ENCODE measurements at regions of chr4 and their contacts with region 1.

Region 1: DNA sequence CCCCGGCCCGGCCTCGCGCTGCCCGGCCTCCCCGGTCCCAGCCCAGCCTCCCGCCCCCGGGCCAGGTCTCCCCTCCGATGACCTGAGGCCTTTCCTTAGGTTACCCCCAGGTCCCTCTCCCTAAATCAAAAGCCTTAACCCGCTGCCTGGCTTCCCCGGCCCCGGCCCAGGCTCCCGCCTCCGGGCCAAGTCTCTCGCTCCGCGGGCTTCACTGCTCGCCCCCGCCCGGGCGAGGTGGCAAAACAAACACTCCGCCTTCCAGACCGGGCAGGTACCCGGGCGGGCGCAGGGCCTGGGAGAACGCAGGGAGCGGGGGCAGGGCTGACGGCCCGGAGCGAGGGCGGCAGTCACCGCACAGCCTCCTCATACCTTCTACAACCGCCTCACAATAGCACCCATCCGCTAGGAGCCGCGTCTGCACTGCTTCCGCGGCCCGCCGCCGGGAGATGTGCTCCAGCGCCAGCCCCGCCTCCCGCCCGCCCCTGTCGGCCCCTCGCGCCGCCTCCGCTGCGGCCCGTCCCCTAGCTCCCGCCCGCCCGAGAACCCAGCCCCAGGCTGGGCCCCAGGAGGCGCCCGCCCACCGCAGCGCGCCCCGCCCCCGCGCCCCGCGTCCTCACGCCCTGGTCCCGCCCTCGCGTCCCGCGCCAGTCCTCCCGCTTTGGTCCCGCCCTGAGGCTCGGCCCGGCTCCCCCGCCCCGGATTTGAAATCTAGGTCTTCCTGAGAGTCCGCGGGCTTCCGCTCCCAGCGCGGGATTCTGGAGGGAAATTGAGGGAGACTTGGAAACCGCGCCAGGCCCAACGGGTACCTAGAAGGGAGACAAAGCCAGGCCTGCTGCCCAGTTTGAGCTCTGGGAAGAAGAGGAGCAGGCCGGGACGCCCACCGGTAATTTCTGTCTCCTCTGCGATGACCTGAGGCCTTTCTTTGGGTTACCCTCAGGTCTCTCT is at the starts of genes CASP3 and PRIMPOL:
- DNase-seq: peak; percentile 93 to 98 (median 95)
- ATAC-seq: peak; percentile 90
- H3K4me3 ChIP-seq: peak within 1 kb of the TSS; percentile 95 to 98
- H3K4me3 Mint-ChIP-seq: peak within 1 kb of the TSS; percentile 94
- H3K27ac ChIP-seq: peak within 1 kb of the TSS; percentile 77 to 87
- H3K27ac Mint-ChIP-seq: peak within 1 kb of the TSS; percentile 96
- H3K4me1 ChIP-seq: peaks cover 43% of the 10 kb centered on the region
- H3K4me1 Mint-ChIP-seq: peaks cover 54% of the 10 kb centered on the region
- H3K27me3 ChIP-seq: no peaks in the 10 kb centered on the region
- H3K27me3 Mint-ChIP-seq: no peaks in the 10 kb centered on the region
- CTCF ChIP-seq: no peak
- total RNA-seq, gene CASP3: 14.4 to 15.7 TPM
- total RNA-seq, gene PRIMPOL: 6.0 to 7.3 TPM

Region 2: DNA sequence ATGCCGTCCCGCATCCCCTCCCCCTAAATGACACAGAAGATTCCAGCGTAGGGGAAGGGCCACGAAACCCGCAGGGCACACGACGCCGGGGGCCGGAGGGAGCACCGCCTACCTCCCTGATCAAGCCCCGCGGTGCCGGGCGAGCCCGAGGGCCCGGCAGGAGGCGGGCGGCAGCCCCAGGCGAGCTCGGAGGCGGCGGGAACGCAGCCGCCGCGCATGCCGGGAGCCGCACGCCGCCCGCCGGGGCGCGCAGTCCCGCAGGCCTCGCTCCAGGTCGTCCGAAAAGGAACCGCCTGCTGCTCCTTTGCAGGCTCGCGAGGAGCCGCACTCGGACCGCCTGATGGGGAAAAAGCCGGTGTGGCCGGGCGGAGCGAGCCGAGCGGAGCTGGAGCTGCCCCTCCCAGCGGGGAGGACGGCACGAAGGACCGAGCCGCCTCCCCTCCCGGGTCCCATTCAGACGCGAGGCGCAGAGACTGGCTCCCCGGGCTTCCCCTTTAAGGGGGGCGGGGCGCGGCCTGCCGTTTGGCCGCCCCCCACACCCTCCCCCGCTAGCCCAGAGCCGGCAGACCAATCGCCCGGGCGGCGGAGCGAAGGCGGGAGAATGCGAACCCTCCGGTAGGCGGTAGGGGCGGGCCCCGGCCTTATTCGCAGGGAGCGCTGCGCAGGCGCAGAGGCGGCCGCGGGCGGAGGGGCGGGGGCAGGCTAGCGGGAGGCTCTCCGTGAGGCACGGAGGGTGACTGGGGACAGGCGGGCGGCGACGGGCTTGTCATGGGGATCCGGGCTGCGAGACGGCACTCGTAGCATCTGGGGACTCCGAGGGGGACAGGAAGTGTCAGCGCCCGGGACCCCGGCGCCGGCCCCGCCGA is 1145.0 kb before region 1 on chr4:
- CTCF ChIA-PET with region 1: no interaction called
- POLR2A ChIA-PET with region 1: no interaction called
- intact Hi-C with region 1: loop called in 1 of 2 experiments (anchors 5 kb)
- DNase-seq: peak; percentile 99 to 100 (median 99)
- ATAC-seq: peak; percentile 78
- H3K4me3 ChIP-seq: peak overlapping the region; percentile 95 to 98
- H3K4me3 Mint-ChIP-seq: peak overlapping the region; percentile 98
- H3K27ac ChIP-seq: peak overlapping the region; percentile 84 to 98
- H3K27ac Mint-ChIP-seq: peak overlapping the region; percentile 99
- H3K4me1 ChIP-seq: peaks cover 14% of the 10 kb centered on the region
- H3K4me1 Mint-ChIP-seq: peaks cover 34% of the 10 kb centered on the region
- H3K27me3 ChIP-seq: no peaks in the 10 kb centered on the region
- H3K27me3 Mint-ChIP-seq: no peaks in the 10 kb centered on the region
- CTCF ChIP-seq: no peak

Region 3: DNA sequence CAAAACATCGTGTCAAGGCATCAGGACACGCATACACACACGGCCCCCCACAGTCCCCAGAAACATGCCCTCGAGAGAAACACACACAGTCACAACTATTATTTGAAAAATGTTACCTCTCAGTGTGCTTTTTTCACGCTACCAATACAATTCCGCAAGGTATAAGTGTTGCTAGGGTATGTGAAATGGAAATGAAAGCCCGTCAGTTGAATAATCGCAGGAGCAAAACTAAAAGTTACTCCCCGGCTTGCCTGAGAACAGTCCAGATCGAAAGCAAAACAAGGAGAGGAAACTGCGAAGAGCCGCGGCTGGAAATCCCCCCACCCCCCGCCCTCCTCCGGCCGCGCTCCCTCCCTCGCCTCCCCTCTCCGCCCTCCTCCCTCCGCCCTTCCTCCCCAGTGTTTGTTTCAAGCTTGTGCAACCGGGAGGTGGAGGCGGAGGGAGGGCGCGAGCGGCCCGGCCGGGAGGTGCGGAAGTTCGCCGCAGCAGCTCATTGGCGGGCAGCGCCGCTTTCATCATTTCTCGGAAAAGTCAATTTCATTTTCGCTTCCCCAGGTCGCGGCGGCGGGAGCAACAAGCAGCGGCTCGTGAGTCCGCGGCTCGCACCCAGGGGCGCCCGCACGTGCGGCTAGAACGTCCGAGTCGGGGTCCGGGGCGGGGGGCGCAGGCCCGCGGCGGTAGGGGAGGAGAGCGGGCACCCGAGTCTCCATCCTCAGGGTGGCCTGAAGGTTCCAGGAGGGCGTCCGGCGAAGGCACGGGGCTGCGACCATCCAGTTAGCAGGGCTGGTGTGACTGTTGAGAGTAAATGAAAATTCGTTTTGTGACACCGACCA is 174.8 kb before region 1 on chr4 and contains the start of gene IRF2:
- CTCF ChIA-PET with region 1: no interaction called
- POLR2A ChIA-PET with region 1: interaction called, 5 read pairs
- intact Hi-C with region 1: loop called (anchors 1 kb)
- DNase-seq: peak; percentile 91 to 99 (median 95)
- ATAC-seq: peak; percentile 82
- H3K4me3 ChIP-seq: peak within 1 kb of the TSS; percentile 78 to 93
- H3K4me3 Mint-ChIP-seq: peak within 1 kb of the TSS; percentile 98
- H3K27ac ChIP-seq: peak within 1 kb of the TSS; percentile 94 to 95
- H3K27ac Mint-ChIP-seq: peak within 1 kb of the TSS; percentile 99
- H3K4me1 ChIP-seq: peaks cover 38% of the 10 kb centered on the region
- H3K4me1 Mint-ChIP-seq: peaks cover 67% of the 10 kb centered on the region
- H3K27me3 ChIP-seq: no peaks in the 10 kb centered on the region
- H3K27me3 Mint-ChIP-seq: no peaks in the 10 kb centered on the region
- CTCF ChIP-seq: no peak
- total RNA-seq, gene IRF2: 7.9 to 9.3 TPM

Region 4: DNA sequence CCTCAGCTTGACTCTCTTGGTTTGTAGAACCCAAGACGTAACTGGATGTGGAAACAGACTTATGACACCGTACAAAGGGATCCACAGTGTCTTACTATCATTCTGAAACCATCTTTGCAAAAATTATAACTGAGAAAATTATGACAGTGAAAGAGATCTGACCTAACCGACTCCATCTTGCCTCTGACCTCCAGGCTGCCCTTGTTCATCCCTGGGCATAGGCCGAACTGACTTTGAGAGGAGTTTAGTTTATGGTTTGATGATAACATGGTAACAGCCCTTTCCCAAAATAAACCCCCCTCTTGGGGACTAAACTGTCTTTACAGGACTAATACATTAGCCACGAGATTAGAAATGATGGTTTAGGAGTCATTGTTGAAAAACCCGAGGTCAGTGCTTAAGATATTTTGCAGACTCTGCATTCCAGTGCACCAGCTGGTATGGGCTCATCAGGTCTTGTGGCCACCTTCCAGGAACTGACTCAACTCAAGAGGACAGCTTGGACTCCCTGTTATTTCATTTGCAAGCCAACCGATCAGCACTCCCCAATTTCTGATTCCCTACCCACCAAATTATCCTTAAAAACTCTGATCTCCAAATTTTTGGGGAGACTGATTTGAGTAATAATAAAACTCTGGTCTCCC is 49.7 kb before region 1 on chr4:
- CTCF ChIA-PET with region 1: no interaction called
- POLR2A ChIA-PET with region 1: no interaction called
- intact Hi-C with region 1: no loop called
- DNase-seq: no peak
- ATAC-seq: no peak
- H3K4me3 ChIP-seq: no peak overlapping the region
- H3K4me3 Mint-ChIP-seq: no peak overlapping the region
- H3K27ac ChIP-seq: no peak overlapping the region
- H3K27ac Mint-ChIP-seq: no peak overlapping the region
- H3K4me1 ChIP-seq: peaks cover 19% of the 10 kb centered on the region
- H3K4me1 Mint-ChIP-seq: peaks cover 15% of the 10 kb centered on the region
- H3K27me3 ChIP-seq: no peaks in the 10 kb centered on the region
- H3K27me3 Mint-ChIP-seq: peaks cover 5% of the 10 kb centered on the region
- CTCF ChIP-seq: no peak

Region 5: GRCh38 chr4:184745831-184746795 is 96.8 kb after region 1 on chr4:
- CTCF ChIA-PET with region 1: no interaction called
- POLR2A ChIA-PET with region 1: no interaction called
- intact Hi-C with region 1: loop called in 1 of 2 experiments (anchors 5 kb)
- DNase-seq: peak; percentile 31 to 81 (median 74)
- ATAC-seq: peak; percentile 97
- H3K4me3 ChIP-seq: no peak overlapping the region
- H3K4me3 Mint-ChIP-seq: peak overlapping the region; percentile 53
- H3K27ac ChIP-seq: no peak overlapping the region
- H3K27ac Mint-ChIP-seq: peak overlapping the region; percentile 78
- H3K4me1 ChIP-seq: peaks cover 8% of the 10 kb centered on the region
- H3K4me1 Mint-ChIP-seq: peaks cover 16% of the 10 kb centered on the region
- H3K27me3 ChIP-seq: no peaks in the 10 kb centered on the region
- H3K27me3 Mint-ChIP-seq: peaks cover 3% of the 10 kb centered on the region
- CTCF ChIP-seq: peak; percentile 68

Region 6: GRCh38 chr4:185209031-185209851 is 559.9 kb after region 1 on chr4 and contains the start of gene SNX25:
- CTCF ChIA-PET with region 1: no interaction called
- POLR2A ChIA-PET with region 1: no interaction called
- intact Hi-C with region 1: loop called (anchors 2 to 5 kb)
- DNase-seq: peak; percentile 68 to 92 (median 89)
- ATAC-seq: peak; percentile 92
- H3K4me3 ChIP-seq: peak within 1 kb of the TSS; percentile 60 to 71
- H3K4me3 Mint-ChIP-seq: peak within 1 kb of the TSS; percentile 92
- H3K27ac ChIP-seq: peak within 1 kb of the TSS; percentile 34 to 48
- H3K27ac Mint-ChIP-seq: peak within 1 kb of the TSS; percentile 84
- H3K4me1 ChIP-seq: peaks cover 33% of the 10 kb centered on the region
- H3K4me1 Mint-ChIP-seq: peaks cover 50% of the 10 kb centered on the region
- H3K27me3 ChIP-seq: no peaks in the 10 kb centered on the region
- H3K27me3 Mint-ChIP-seq: no peaks in the 10 kb centered on the region
- CTCF ChIP-seq: no peak
- total RNA-seq, gene SNX25: 18.0 to 18.2 TPM

Region 7: DNA sequence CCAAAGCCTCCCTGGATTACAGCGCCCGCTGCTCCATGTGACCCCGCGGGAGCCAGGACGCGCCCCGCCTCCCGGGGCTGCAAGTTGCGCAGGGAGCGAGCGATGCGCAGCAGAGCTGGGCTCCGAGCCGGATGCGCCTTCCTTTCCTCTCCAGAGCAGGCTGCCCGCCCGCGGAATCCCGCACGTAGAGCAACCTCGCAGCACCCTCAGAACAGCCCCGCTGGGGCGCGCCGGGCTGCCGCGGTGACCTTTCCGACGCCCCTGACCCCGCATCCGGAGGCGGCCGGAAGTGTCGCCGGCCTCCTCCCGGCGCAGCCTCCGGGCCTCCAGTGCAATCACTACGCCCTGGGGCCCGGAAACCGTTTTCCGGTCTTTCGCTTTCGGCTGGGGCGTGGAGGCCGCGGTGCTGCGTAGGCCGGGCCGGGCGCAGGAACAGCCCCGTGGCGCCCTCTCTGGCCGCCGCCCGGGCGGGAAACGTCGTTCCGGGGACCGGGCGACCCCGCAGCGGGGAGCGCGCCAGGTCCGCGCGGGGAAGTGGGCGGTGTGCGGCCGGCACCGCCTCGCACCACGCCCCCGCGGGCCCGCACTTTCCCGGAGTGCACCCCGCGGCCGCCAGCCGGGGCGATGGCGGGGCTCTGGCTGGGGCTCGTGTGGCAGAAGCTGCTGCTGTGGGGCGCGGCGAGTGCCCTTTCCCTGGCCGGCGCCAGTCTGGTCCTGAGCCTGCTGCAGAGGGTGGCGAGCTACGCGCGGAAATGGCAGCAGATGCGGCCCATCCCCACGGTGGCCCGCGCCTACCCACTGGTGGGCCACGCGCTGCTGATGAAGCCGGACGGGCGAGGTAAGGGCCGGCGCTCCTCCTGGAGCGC is 1542.1 kb after region 1 on chr4 and contains the start of gene CYP4V2:
- CTCF ChIA-PET with region 1: no interaction called
- POLR2A ChIA-PET with region 1: no interaction called
- intact Hi-C with region 1: loop called in 1 of 2 experiments (anchors 10 kb)
- DNase-seq: peak; percentile 64 to 92 (median 85)
- ATAC-seq: peak; percentile 80
- H3K4me3 ChIP-seq: peak within 1 kb of the TSS; percentile 73 to 85
- H3K4me3 Mint-ChIP-seq: peak within 1 kb of the TSS; percentile 90
- H3K27ac ChIP-seq: peak within 1 kb of the TSS; percentile 89 to 91
- H3K27ac Mint-ChIP-seq: peak within 1 kb of the TSS; percentile 98
- H3K4me1 ChIP-seq: peaks cover 25% of the 10 kb centered on the region
- H3K4me1 Mint-ChIP-seq: peaks cover 57% of the 10 kb centered on the region
- H3K27me3 ChIP-seq: no peaks in the 10 kb centered on the region
- H3K27me3 Mint-ChIP-seq: no peaks in the 10 kb centered on the region
- CTCF ChIP-seq: no peak
- total RNA-seq, gene CYP4V2: 7.9 to 9.9 TPM

Measured in CD8-positive, alpha-beta T cell (primary cell).